Activated CD4-positive, alpha-beta T cell treated with anti-CD3 and anti-CD28 coated beads for 36 hours (primary cell): ENCODE measurements at regions of chr22 and their contacts with region 1.

Region 1: GRCh38 chr22:17084554-17085276 is at the start of gene IL17RA:
- DNase-seq: peak; percentile 96
- ATAC-seq: peak; percentile 96
- H3K4me3 Mint-ChIP-seq: peak within 1 kb of the TSS; percentile 80
- H3K27ac Mint-ChIP-seq: peak within 1 kb of the TSS; percentile 79
- H3K4me1 Mint-ChIP-seq: peaks cover 46% of the 10 kb centered on the region
- H3K27me3 Mint-ChIP-seq: no peaks in the 10 kb centered on the region
- total RNA-seq, gene IL17RA: 13.1 to 13.3 TPM

Region 2: DNA sequence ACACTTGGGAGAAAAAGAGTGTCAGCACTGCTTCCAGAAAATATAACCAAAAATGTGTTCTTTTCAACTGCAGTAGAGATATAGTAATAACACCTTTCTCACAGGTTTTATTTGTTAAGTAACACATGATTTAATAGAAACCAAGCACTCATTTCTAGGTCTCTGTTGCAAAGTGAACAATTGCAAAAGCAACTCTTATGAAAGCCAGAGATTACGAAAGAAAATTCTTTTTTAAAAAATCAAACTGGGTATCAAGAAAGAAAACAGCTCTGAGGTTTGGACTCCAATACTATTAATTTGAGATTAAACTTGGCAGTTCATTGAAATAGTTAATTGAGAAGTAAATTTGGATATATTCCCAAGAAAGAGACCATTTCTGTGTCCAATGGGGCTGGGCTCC is 249.7 kb before region 1 on chr22:
- CTCF ChIA-PET with region 1: no interaction called
- POLR2A ChIA-PET with region 1: no interaction called
- intact Hi-C with region 1: no loop called
- DNase-seq: no peak
- ATAC-seq: no peak
- H3K4me3 Mint-ChIP-seq: no peak overlapping the region
- H3K27ac Mint-ChIP-seq: no peak overlapping the region
- H3K4me1 Mint-ChIP-seq: no peaks in the 10 kb centered on the region
- H3K27me3 Mint-ChIP-seq: no peaks in the 10 kb centered on the region

Region 3: DNA sequence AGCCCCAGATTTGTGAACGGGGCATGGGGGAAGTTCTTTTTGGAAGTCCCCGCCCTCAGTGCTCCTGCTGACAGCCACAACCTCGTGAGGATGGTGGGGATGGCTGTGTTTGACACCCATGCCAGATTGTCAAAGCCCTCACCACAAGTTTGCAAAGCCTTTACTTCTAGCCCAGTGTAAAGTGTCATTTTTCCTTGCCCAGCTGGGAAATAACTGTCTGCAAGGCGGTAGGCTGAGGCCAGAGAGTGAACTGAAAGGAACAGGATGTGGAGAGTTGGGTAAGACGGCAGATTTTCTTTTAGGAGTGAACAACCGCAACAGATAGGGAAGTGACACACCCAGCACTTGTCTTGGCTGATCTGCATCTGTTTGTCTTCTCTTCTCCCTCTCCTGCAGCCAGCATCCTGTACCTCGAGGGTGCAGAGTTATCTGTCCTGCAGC is 13.7 kb after region 1 on chr22:
- CTCF ChIA-PET with region 1: interaction called, 4 read pairs
- POLR2A ChIA-PET with region 1: no interaction called
- intact Hi-C with region 1: loop called in 1 of 2 experiments (anchors 1 kb)
- DNase-seq: peak; percentile 38
- ATAC-seq: peak; percentile 76
- H3K4me3 Mint-ChIP-seq: no peak overlapping the region
- H3K27ac Mint-ChIP-seq: peak overlapping the region; percentile 47
- H3K4me1 Mint-ChIP-seq: peaks cover 82% of the 10 kb centered on the region
- H3K27me3 Mint-ChIP-seq: no peaks in the 10 kb centered on the region

Region 4: DNA sequence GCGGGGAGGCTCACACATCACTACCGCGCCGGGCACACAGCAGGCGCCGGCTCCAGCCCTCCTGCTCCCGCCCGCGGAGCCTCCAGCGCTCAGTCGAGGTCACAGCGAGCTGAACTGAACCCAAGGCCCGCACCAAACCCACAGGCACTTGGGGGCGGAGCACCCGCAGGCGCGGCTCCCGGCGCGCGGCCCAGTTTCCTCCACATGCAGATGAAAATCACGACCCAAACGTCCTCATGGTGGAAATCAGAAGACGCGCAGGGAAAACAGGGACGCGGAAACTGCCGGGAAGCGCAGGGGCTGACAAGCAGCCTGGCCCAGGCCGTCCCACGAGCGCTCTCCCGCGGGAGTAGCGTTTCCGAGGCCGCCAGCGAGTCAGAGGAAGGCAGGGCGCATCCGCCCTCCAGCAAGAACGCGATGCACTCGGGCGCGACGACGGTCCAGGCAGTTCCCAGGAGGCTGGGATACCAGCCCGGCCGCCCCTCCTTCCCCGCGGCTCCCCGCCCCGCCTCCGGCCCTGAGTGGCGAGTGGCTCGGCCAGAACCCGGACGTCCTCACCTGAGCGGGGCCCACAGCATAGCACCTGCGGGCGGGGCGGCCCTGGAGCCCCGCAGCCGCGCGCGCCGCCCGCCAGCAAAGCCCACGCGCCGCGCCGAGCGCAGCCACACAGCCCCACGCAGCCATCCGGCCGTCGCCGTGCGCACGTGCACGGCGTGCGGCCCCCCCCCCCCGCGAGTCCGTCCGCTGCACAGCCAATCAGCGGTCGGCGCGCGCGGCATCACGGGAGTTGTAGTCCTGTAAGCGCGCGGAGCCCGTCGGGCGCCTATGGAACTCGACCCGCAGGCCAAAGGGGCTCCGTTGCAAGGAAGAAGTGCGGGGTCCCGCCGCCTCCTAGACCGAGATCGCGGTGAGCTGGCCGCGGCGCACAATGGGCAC is 74.1 kb after region 1 on chr22 and contains the start of gene HDHD5:
- CTCF ChIA-PET with region 1: interaction called, 3 read pairs
- POLR2A ChIA-PET with region 1: no interaction called
- intact Hi-C with region 1: loop called (anchors 1 kb)
- DNase-seq: peak; percentile 94
- ATAC-seq: peak; percentile 82
- H3K4me3 Mint-ChIP-seq: peak within 1 kb of the TSS; percentile 84
- H3K27ac Mint-ChIP-seq: peak within 1 kb of the TSS; percentile 87
- H3K4me1 Mint-ChIP-seq: peaks cover 32% of the 10 kb centered on the region
- H3K27me3 Mint-ChIP-seq: no peaks in the 10 kb centered on the region
- total RNA-seq, gene HDHD5: 51.6 to 69.0 TPM

Region 5: GRCh38 chr22:17213976-17214375 is 129.3 kb after region 1 on chr22:
- CTCF ChIA-PET with region 1: interaction called, 3 read pairs
- POLR2A ChIA-PET with region 1: no interaction called
- intact Hi-C with region 1: loop called in 1 of 2 experiments (anchors 2 kb)
- DNase-seq: peak; percentile 74
- ATAC-seq: peak; percentile 49
- H3K4me3 Mint-ChIP-seq: no peak overlapping the region
- H3K27ac Mint-ChIP-seq: no peak overlapping the region
- H3K4me1 Mint-ChIP-seq: peaks cover 46% of the 10 kb centered on the region
- H3K27me3 Mint-ChIP-seq: no peaks in the 10 kb centered on the region

Region 6: GRCh38 chr22:17628304-17629166 is 543.8 kb after region 1 on chr22 and contains the start of gene ATP6V1E1:
- CTCF ChIA-PET with region 1: no interaction called
- POLR2A ChIA-PET with region 1: no interaction called
- intact Hi-C with region 1: loop called (anchors 1 to 10 kb)
- DNase-seq: peak; percentile 96
- ATAC-seq: peak; percentile 100
- H3K4me3 Mint-ChIP-seq: peak within 1 kb of the TSS; percentile 95
- H3K27ac Mint-ChIP-seq: peak within 1 kb of the TSS; percentile 93
- H3K4me1 Mint-ChIP-seq: peaks cover 19% of the 10 kb centered on the region
- H3K27me3 Mint-ChIP-seq: no peaks in the 10 kb centered on the region
- total RNA-seq, gene ATP6V1E1: 83.5 to 95.6 TPM

Region 7: DNA sequence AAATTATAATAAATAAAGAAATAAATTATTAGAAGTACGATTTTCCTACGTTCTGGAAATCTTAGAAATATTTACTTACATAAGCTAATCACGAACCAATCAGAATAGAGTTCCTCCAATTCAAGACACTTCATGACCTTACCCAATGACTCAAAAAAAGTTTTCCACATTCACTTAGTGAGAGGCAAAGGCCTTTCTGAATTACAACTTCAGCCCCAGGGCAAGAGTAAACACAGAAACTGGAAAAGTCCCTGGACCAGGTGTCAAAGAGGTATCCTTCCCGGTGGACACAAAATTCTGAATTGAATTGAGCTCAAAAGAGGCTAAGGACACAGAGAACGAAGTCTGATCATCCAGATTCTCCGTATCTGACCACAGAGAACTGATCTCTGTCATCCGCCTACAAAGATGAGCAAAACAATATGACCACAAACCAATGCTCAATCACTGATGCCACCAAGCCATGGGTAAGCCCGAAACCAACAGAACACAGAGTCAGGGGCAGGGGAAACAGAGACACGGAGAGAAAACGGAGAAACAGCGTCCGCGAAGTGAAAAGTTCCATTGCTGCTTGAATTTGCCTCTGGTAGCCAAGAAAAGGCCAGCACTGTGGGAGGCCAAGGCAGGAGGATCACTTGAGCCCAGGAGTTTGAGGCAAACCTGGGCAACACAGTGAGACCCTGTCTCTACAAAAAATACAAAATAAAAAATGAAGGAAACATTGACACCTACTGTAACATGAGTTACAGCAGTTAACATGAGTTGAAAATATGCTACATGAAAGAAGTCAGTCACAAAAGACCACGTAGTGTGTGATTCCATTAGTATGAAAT is 682.7 kb after region 1 on chr22:
- CTCF ChIA-PET with region 1: no interaction called
- POLR2A ChIA-PET with region 1: no interaction called
- intact Hi-C with region 1: loop called (anchors 2 to 5 kb)
- DNase-seq: peak; percentile 78
- ATAC-seq: peak; percentile 86
- H3K4me3 Mint-ChIP-seq: peak overlapping the region; percentile 50
- H3K27ac Mint-ChIP-seq: peak overlapping the region; percentile 55
- H3K4me1 Mint-ChIP-seq: peaks cover 54% of the 10 kb centered on the region
- H3K27me3 Mint-ChIP-seq: peaks cover 7% of the 10 kb centered on the region